Activated CD8-positive, alpha-beta T cell treated with anti-CD3 and anti-CD28 coated beads for 36 hours (primary cell): ENCODE measurements at regions of chr16 and their contacts with region 1.

Region 1: GRCh38 chr16:2980227-2981086 is at the start of gene PKMYT1:
- DNase-seq: peak; percentile 94
- ATAC-seq: peak; percentile 94
- H3K4me3 Mint-ChIP-seq: peak within 1 kb of the TSS; percentile 87
- H3K27ac Mint-ChIP-seq: peak within 1 kb of the TSS; percentile 86
- H3K4me1 Mint-ChIP-seq: peaks cover 13% of the 10 kb centered on the region
- H3K27me3 Mint-ChIP-seq: no peaks in the 10 kb centered on the region
- CTCF ChIP-seq: no peak
- total RNA-seq, gene PKMYT1: 121 to 123 TPM

Region 2: GRCh38 chr16:2854700-2855309 is 125.7 kb before region 1 on chr16:
- CTCF ChIA-PET with region 1: no interaction called
- POLR2A ChIA-PET with region 1: no interaction called
- intact Hi-C with region 1: no loop called
- DNase-seq: peak; percentile 29
- ATAC-seq: no peak
- H3K4me3 Mint-ChIP-seq: no peak overlapping the region
- H3K27ac Mint-ChIP-seq: no peak overlapping the region
- H3K4me1 Mint-ChIP-seq: peaks cover 4% of the 10 kb centered on the region
- H3K27me3 Mint-ChIP-seq: peaks cover 6% of the 10 kb centered on the region
- CTCF ChIP-seq: peak; percentile 86

Region 3: DNA sequence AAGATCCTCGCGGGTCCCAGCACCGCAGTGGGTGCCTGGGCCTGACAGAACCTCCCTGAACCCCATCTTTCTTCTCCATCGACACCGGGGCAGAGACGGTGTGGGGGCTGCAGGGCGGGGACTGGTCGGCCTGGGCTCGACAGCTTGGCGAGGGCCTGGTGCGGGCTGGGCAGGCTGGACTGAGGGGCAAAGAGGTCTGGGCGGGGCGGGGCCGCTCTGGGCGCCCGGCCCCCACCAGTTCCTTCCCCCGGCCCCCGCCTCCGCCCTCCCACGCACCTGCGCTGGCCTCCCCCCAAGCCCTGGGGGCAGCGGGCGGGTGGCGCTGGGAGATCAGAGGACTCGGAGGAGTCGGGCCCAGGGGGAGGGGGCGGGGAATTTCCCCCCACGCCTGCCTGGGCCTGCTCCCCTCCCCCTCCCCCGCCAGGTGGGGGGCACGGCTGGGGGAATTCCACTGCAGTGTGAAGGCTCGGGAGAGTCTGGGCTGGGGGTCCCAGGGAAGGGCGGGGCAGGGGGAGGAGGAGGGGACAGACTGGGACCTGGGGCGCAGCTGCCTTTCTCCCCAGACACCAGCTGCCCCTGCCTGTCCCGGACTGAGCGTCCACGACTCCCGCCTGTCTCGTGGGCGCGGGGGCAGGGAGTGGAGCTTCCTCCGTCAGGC is 17.3 kb before region 1 on chr16:
- CTCF ChIA-PET with region 1: interaction called, 12 read pairs
- POLR2A ChIA-PET with region 1: interaction called, 8 read pairs
- intact Hi-C with region 1: no loop called
- DNase-seq: no peak
- ATAC-seq: no peak
- H3K4me3 Mint-ChIP-seq: peak overlapping the region; percentile 51
- H3K27ac Mint-ChIP-seq: no peak overlapping the region
- H3K4me1 Mint-ChIP-seq: peaks cover 25% of the 10 kb centered on the region
- H3K27me3 Mint-ChIP-seq: peaks cover 30% of the 10 kb centered on the region
- CTCF ChIP-seq: no peak

Region 4: DNA sequence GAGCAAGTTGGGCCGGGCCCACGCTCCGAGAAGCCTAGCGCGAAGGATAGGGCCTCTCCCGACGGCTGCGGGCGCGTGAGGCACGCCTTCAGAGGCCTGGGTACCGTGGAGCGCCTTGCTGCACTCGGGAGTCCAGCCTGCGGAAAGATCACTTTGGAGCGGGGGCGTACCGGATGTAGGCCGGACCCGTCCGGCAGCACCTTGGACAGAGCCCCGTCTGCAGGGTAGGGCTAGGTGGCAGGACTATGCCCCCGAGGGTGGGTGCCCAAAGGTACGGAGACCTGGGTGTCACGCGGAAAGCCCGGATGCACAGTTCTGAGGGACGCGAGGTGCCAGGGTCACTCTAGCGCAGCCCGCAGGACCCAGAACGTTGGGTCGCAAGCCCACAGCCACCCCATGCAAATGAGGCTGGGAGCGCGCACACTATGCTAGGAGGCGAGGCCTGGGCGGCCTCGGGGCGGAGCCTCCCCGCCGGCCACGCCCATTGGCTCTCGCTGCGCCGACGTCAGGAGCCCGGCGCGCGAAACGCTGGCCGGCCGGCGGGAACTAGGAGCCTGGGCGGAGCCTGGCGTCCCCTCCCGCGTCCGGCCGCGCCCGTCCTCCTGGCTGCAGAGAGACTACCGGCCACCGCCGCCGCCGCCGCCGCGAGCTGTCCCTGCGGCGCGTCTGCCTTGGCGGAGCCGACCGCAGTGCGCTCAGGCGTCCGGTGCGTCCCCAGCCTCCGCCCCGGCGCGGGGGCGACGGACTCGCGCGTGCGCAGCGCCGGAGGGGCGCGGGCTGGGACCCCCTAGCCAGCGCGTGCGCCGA is 11.5 kb before region 1 on chr16 and contains the start of gene PAQR4:
- CTCF ChIA-PET with region 1: interaction called, 14 read pairs
- POLR2A ChIA-PET with region 1: interaction called, 20 read pairs
- intact Hi-C with region 1: no loop called
- DNase-seq: peak; percentile 86
- ATAC-seq: peak; percentile 75
- H3K4me3 Mint-ChIP-seq: peak within 1 kb of the TSS; percentile 79
- H3K27ac Mint-ChIP-seq: no peak within 1 kb of the TSS
- H3K4me1 Mint-ChIP-seq: peaks cover 26% of the 10 kb centered on the region
- H3K27me3 Mint-ChIP-seq: peaks cover 21% of the 10 kb centered on the region
- CTCF ChIP-seq: no peak
- total RNA-seq, gene PAQR4: 29.4 to 30.4 TPM